ENCODE measurements at regions of chr10 and their contacts with region 1.

Region 1: GRCh38 chr10:114304017-114304570 is 65.0 kb downstream of the VWA2 start:
- DNase-seq: peak; percentile 91
- H3K4me3 Mint-ChIP-seq: peak overlapping the region; percentile 86
- H3K27ac Mint-ChIP-seq: peak overlapping the region; percentile 60
- H3K4me1 Mint-ChIP-seq: peaks cover 16% of the 10 kb centered on the region
- H3K27me3 Mint-ChIP-seq: no peaks in the 10 kb centered on the region

Region 2: DNA sequence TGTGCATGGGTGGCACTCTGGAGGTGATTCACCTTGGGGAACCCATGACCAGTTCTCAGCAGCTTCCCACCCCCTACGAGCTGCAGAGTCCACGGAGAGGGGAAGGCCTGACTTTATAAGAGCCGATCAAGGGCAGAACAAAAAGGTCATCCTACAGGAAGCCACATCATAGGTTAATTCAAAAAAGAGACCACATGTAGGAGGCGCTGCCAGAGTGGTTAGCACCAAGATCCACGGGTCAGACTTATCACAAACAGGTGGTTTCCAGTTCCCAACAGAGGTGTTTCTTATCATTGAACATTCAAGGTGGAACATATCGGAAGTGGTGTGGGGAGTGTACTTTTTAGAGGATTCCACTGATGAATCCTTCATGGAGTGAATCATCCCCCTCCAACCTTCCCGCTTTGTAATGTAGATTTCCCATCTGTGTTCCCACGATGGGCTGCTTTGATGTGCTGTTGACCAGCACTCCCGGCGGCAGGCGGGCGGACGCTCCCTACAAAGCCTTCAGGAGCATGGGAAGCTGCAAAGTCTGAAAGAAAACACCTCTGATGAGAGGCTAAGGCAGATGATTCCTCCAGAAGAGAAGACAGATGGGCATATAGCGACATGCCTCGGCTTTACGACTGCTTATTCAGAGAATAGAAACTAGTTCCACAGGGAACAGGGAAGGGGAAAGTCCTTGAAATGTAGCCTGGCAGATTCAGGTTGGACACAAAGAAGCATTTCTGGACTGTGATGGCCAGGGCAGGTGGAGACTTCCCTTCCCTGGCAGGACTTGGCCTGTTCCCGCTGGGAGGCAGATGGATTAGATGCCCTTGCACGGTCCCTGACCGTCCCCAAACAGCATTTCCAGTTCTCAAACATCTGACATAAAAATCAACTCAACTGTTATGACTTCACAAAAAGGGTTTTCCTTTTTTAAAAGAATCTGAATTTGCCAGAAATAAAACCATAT is 33.7 kb after region 1 on chr10:
- intact Hi-C with region 1: no loop called
- DNase-seq: no peak
- H3K4me3 Mint-ChIP-seq: no peak overlapping the region
- H3K27ac Mint-ChIP-seq: peak overlapping the region; percentile 45
- H3K4me1 Mint-ChIP-seq: peaks cover 29% of the 10 kb centered on the region
- H3K27me3 Mint-ChIP-seq: peaks cover 2% of the 10 kb centered on the region

Region 3: DNA sequence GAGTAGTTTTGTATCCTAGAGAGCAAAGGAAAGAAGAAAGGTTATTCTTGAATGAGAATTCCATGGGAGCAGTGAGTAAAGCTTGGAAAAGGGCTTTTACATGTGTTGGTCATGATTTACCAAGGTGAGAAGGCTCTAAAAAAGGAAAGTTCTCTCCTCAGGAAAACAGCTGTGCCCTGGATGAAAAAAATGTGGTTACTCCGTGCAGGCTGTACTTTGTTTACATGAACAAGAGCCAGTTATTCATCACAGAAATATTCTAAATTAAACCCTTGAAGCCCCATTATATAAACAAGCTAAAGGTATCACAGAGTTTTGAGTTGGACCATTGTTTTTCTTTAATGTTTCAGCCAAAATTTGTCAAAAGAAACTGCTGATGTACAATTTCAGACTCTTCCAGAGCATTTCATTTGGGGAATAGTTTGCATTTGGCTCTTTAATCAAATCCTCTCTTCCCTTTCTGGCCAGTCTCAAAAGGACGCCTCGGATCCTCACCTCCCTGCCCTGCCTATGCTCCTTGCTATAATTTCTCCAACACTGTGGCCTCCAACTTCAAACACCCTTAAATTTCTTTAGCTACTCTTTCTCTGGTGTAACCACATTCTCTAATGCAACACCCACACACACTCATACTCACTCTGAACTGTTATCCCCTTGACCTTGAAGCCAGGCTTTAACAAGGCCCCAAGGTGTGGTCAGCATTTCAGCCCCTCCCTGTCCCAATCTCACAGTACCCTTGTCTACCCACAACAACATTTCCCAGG is 52.8 kb after region 1 on chr10:
- intact Hi-C with region 1: no loop called
- DNase-seq: no peak
- H3K4me3 Mint-ChIP-seq: no peak overlapping the region
- H3K27ac Mint-ChIP-seq: no peak overlapping the region
- H3K4me1 Mint-ChIP-seq: peaks cover 5% of the 10 kb centered on the region
- H3K27me3 Mint-ChIP-seq: peaks cover 4% of the 10 kb centered on the region

Region 4: DNA sequence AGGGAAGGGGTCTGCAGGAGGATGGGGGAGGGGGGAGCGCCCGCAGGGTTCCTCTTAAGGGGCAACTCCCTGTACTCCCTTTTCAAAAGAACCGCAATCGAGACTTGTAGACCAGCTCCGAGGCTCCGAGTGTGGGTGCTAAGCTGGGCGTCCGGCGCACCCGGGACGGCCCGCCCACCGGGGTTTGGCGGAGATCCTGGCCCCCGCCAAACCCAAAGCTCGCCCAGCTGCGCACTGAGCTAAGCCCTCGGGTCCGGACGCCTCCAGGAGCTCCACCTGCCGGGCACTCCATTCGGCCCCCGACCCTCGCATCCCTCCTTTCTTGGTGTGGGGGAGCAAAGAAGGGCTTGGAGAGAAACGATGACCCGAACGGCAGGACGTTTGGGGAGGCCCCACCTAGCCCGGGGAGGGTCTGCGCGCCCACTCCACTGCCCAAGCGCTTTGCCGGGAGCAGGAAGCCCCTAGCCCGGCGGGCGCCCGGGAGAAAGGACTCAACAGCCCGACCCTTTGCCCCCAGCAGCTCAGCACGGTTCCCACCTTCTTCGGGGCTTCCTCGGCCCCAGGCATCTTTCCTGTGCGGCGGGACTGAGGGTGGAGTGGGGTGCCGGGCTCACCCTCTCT is 99.6 kb after region 1 on chr10:
- intact Hi-C with region 1: loop called (anchors 5 kb)
- DNase-seq: no peak
- H3K4me3 Mint-ChIP-seq: no peak overlapping the region
- H3K27ac Mint-ChIP-seq: no peak overlapping the region
- H3K4me1 Mint-ChIP-seq: peaks cover 9% of the 10 kb centered on the region
- H3K27me3 Mint-ChIP-seq: peaks cover 65% of the 10 kb centered on the region

Region 5: GRCh38 chr10:114458955-114459354 is 154.9 kb after region 1 on chr10:
- intact Hi-C with region 1: loop called (anchors 1 kb)
- DNase-seq: peak; percentile 65
- H3K4me3 Mint-ChIP-seq: no peak overlapping the region
- H3K27ac Mint-ChIP-seq: peak overlapping the region; percentile 40
- H3K4me1 Mint-ChIP-seq: peaks cover 10% of the 10 kb centered on the region
- H3K27me3 Mint-ChIP-seq: no peaks in the 10 kb centered on the region

Region 6: GRCh38 chr10:114653926-114654325 is 349.8 kb after region 1 on chr10:
- intact Hi-C with region 1: no loop called
- DNase-seq: peak; percentile 61
- H3K4me3 Mint-ChIP-seq: no peak overlapping the region
- H3K27ac Mint-ChIP-seq: no peak overlapping the region
- H3K4me1 Mint-ChIP-seq: peaks cover 11% of the 10 kb centered on the region
- H3K27me3 Mint-ChIP-seq: peaks cover 13% of the 10 kb centered on the region

Region 7: GRCh38 chr10:114783686-114784085 is 479.6 kb after region 1 on chr10:
- intact Hi-C with region 1: loop called (anchors 1 kb)
- DNase-seq: peak; percentile 21
- H3K4me3 Mint-ChIP-seq: no peak overlapping the region
- H3K27ac Mint-ChIP-seq: no peak overlapping the region
- H3K4me1 Mint-ChIP-seq: peaks cover 10% of the 10 kb centered on the region
- H3K27me3 Mint-ChIP-seq: peaks cover 1% of the 10 kb centered on the region

Measured in activated CD4-positive, alpha-beta T cell treated with anti-CD3 and anti-CD28 coated beads, Interleukin-2, amount 10 ng/mL, durations not matched to agents 24 days and 14 days (primary cell).